Tibial artery (tissue), 4 donors: ENCODE measurements at regions of chr21 and their contacts with region 1.

Region 1: DNA sequence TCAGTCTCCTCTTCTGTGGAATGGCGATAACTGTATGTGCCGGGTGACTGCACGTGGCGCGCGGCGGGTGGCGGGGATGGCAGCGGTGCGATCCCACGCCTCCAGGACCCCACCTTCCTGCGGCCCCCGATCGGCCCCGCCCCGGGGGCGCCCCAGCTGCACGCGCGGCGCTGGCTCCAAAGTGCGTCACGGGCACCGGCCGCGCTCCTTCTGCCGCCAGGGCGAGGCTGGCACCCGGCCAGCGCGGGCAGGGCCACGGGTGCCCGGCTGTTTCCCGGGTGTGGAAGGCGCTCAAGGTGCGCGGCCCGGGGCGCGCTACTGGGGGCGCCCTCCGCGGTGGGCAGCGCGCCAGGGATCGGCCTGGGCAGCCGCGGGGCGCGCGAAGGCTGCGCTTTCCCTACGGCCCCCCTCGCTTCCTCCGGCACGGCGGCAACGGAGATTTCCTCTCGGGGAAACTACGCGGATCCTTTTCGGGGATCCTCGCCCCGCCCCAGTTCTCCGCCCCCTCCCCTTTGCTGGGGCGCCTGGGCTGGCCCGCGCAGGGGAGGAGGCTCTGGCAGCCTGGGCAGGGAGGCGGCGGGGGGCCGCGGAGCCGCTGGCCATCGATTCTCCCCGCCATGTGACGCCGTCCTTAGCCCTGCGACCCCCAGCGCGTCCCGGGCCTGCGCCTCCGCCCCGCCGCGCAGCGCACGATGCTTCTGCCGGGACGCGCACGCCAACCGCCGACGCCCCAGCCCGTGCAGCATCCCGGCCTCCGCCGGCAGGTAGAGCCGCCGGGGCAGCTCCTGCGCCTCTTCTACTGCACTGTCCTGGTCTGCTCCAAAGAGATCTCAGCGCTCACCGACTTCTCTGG is at the start of gene EVA1C:
- DNase-seq: peak; percentile 66 to 90
- H3K4me3 ChIP-seq: peak within 1 kb of the TSS; percentile 73 to 87
- H3K27ac ChIP-seq: peak within 1 kb of the TSS; percentile 93 to 98
- H3K4me1 ChIP-seq: peaks cover 0 to 48% (median 40%) of the 10 kb centered on the region in 4 donors
- H3K27me3 ChIP-seq: no peaks in the 10 kb centered on the region
- CTCF ChIP-seq: peak; percentile 15 to 38

Region 2: GRCh38 chr21:32392880-32393676 is 19.3 kb before region 1 on chr21 and contains the start of gene URB1:
- intact Hi-C with region 1: no loop called
- DNase-seq: peak; percentile 86 to 94
- H3K4me3 ChIP-seq: peak within 1 kb of the TSS; percentile 87 to 97
- H3K27ac ChIP-seq: peak within 1 kb of the TSS; percentile 72 to 84
- H3K4me1 ChIP-seq: peaks cover 0 to 28% (median 20%) of the 10 kb centered on the region in 4 donors
- H3K27me3 ChIP-seq: no peaks in the 10 kb centered on the region
- CTCF ChIP-seq: no peak

Region 3: GRCh38 chr21:32457360-32457840 is 45.0 kb after region 1 on chr21:
- intact Hi-C with region 1: loop called (anchors 5 kb)
- DNase-seq: peak; percentile 50 to 78
- H3K4me3 ChIP-seq: no peak overlapping the region
- H3K27ac ChIP-seq: peak overlapping the region; percentile 35 to 61
- H3K4me1 ChIP-seq: peaks cover 0 to 32% (median 22%) of the 10 kb centered on the region in 4 donors
- H3K27me3 ChIP-seq: no peaks in the 10 kb centered on the region
- CTCF ChIP-seq: no peak

Region 4: DNA sequence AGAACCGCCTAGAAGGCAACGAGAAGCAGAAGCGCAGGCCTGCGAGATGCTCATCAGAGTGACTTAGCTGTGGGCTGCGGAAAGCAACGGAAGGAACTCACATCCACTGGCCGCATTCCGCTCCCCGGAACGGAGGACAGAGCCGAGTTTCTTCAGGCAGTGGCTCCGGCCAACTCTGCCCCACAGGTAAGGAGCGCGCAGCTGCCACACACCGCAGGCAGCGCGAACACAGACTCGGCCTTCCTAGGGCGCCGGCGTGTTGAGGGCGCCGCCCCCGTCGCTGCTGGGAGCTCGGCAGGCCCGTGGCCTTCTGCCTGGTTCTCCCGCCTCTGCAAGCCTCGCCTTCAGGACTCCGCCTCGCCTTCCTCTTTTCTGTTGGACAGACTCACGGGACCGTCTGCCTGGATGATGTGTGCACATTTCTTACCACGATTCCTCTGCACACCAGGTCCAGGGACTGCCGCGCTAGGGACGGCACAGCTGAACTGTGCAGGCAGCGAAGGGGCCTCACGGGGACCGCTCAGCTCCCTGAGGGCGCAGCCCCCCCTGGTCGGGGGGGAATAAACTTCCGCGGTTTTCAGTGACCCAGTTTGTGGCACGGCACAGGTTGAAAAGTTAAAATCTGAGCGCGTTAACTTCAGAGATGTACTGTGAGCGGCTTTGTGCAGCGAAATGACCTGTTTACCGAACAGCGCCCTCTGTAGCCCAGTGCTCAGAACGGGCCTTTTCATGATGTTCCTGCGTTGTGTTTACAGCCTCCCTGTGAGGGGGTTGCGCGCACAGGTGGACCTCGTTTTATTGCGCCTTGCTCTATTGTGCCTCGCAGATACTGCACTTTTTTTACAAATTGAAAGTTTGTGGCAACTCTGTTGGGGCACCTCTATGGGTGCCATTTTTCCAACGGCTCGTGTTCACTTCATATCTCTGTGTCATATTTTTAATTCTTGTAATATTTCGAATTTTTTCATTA is 157.2 kb after region 1 on chr21:
- intact Hi-C with region 1: loop called (anchors 5 kb)
- DNase-seq: peak; percentile 81 to 86
- H3K4me3 ChIP-seq: peak overlapping the region; percentile 54 to 65
- H3K27ac ChIP-seq: peak overlapping the region; percentile 70 to 74
- H3K4me1 ChIP-seq: peaks cover 0 to 21% (median 4%) of the 10 kb centered on the region in 4 donors
- H3K27me3 ChIP-seq: peaks cover 0 to 6% of the 10 kb centered on the region in 2 donors
- CTCF ChIP-seq: peak; percentile 75 to 76